Cardiac septum (tissue), 1 donor: ENCODE measurements at regions of chr2 and their contacts with region 1.

Region 1: GRCh38 chr2:235050992-235051351 is 99.2 kb downstream of the SH3BP4 start:
- DNase-seq: peak; percentile 96

Region 2: GRCh38 chr2:234881413-234882241 is 169.3 kb before region 1 on chr2:
- intact Hi-C with region 1: loop called (anchors 5 kb)
- DNase-seq: peak; percentile 85

Region 3: DNA sequence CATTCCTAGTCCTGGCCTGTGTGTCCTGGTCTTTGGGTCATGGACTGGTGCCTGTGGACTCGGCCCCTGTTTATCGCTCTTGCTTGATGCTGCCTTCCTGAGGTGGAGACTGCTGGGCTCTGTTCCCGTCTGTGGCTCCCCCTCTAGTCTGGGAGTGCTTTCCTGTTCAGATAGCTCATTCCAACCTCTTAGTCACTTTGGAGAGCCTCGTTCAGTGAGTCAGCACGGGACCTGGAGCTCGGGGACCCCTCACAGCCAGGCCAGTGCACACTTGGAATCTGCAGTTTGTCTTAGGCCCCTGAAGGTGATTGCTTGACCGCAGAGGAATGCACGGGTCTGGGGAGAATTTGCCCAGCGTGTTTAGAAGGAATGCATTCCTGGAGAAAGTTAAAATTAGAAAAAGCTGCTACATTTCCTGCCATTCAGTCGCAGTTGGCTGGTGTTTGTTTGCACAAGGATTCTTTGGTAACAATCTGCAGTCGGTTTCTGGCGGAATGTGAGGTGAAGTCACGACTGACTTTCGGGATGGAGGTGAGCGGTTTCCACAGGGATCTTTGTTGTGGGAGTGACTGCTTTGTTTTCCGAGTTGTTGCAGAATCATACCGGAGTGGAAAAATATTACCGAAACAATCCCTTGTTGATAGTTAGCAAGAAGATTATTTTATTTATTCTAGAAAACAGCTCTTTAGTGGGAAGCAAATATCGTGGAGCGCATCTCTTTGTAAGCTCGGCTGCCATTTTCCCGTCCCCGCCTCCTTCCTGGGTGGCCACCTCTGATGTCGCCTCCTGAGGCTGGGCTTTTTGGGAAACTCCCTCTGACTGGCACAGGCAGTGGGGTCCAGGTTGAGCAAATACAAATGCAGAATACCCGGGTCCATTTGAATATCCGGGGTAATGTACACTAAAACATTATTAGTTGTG is 69.5 kb before region 1 on chr2:
- intact Hi-C with region 1: loop called (anchors 2 kb)
- DNase-seq: peak; percentile 85

Region 4: GRCh38 chr2:235063471-235063961 is 12.5 kb after region 1 on chr2:
- intact Hi-C with region 1: loop called (anchors 1 kb)
- DNase-seq: no peak